A549 (cell line): ENCODE measurements at regions of chr11 and their contacts with region 1.

Region 1: GRCh38 chr11:45233121-45233803 is 52.9 kb downstream of the SYT13 start:
- DNase-seq: peak; percentile 61 to 93
- ATAC-seq: peak; percentile 87 to 96
- H3K4me3 ChIP-seq: no peak overlapping the region
- H3K27ac ChIP-seq: no peak overlapping the region
- H3K4me1 ChIP-seq: no peaks in the 10 kb centered on the region
- CTCF ChIP-seq: peak; percentile 61
- EP300 ChIP-seq: no peak
- POLR2A ChIP-seq: no peak
- RAD21 ChIP-seq: peak; percentile 31 to 41; a peak in 2 of 5 replicates

Region 2: GRCh38 chr11:45209891-45210699 is 23.2 kb before region 1 on chr11:
- CTCF ChIA-PET with region 1: interaction called, 12 read pairs
- POLR2A ChIA-PET with region 1: no interaction called
- DNase-seq: no peak
- ATAC-seq: no peak
- H3K4me3 ChIP-seq: no peak overlapping the region
- H3K27ac ChIP-seq: no peak overlapping the region
- H3K4me1 ChIP-seq: no peaks in the 10 kb centered on the region
- CTCF ChIP-seq: no peak
- EP300 ChIP-seq: no peak
- POLR2A ChIP-seq: no peak
- RAD21 ChIP-seq: no peak

Region 3: DNA sequence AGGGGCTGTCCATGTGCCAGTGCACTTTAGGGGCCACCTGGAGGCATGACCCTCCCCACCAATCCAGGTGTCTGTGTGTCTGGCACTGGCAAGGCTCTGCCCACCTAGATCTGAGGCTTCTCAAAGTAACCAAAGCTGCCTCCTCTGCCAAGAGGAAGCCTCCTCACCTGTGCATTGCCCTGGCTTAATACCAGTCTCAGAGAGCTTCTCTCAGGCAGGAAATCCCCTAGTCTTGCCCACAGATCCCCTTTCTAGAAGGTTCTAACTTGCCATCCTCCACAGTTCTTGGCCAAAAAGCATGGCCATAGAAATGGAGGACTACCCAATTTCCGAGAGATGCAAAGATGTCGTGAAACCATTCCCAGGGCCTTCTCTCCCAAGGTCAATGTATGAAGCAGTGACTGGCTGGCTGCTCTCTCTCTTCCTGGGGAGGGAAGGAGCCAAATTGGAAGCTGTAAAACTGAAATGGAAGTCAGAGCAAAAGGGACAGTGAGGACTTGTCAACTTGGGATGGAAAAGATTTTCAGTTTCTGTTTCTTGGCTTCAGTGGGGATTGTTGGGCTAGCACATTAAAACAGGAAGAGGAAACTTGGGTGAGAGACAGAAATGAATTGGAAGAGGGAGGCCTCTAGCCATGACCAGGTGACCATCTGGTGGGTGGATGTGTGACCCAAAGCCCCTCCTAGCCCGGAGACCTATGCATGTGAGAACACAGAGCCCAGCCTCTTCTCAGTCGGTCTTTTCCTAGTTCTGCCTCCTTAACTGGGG is 18.0 kb before region 1 on chr11:
- CTCF ChIA-PET with region 1: interaction called, 12 read pairs
- POLR2A ChIA-PET with region 1: no interaction called
- DNase-seq: no peak
- ATAC-seq: no peak
- H3K4me3 ChIP-seq: no peak overlapping the region
- H3K27ac ChIP-seq: no peak overlapping the region
- H3K4me1 ChIP-seq: no peaks in the 10 kb centered on the region
- CTCF ChIP-seq: no peak
- EP300 ChIP-seq: no peak
- POLR2A ChIP-seq: no peak
- RAD21 ChIP-seq: no peak

Region 4: GRCh38 chr11:45252134-45252855 is 19.0 kb after region 1 on chr11:
- CTCF ChIA-PET with region 1: interaction called, 69 read pairs
- POLR2A ChIA-PET with region 1: no interaction called
- DNase-seq: peak; percentile 69 to 78
- ATAC-seq: peak; percentile 91 to 99
- H3K4me3 ChIP-seq: no peak overlapping the region
- H3K27ac ChIP-seq: 0 out of 6 replicates have a peak overlapping the region, but pooled peaks of 1 of the 2 experiments have one; percentile 29
- H3K4me1 ChIP-seq: 0 out of 3 replicates have a peak, but pooled peaks cover 6% of the 10 kb centered on the region
- CTCF ChIP-seq: peak; percentile 82
- EP300 ChIP-seq: no peak
- POLR2A ChIP-seq: no peak
- RAD21 ChIP-seq: peak; percentile 90 to 92

Region 5: GRCh38 chr11:45285930-45286632 is 52.8 kb after region 1 on chr11 and contains the start of gene SYT13:
- CTCF ChIA-PET with region 1: interaction called, 12 read pairs
- POLR2A ChIA-PET with region 1: no interaction called
- DNase-seq: peak; percentile 30 to 62
- ATAC-seq: peak; percentile 86 to 91
- H3K4me3 ChIP-seq: peak within 1 kb of the TSS; percentile 65
- H3K27ac ChIP-seq: peak within 1 kb of the TSS; percentile 73 to 87
- H3K4me1 ChIP-seq: peaks cover 12% of the 10 kb centered on the region
- CTCF ChIP-seq: no peak
- EP300 ChIP-seq: no peak
- POLR2A ChIP-seq: peak; percentile 24; the same call in 1 of the 2 replicates
- RAD21 ChIP-seq: no peak
- polyA plus RNA-seq, gene SYT13: 8.1 and 10.7 TPM in 2 replicates

Region 6: DNA sequence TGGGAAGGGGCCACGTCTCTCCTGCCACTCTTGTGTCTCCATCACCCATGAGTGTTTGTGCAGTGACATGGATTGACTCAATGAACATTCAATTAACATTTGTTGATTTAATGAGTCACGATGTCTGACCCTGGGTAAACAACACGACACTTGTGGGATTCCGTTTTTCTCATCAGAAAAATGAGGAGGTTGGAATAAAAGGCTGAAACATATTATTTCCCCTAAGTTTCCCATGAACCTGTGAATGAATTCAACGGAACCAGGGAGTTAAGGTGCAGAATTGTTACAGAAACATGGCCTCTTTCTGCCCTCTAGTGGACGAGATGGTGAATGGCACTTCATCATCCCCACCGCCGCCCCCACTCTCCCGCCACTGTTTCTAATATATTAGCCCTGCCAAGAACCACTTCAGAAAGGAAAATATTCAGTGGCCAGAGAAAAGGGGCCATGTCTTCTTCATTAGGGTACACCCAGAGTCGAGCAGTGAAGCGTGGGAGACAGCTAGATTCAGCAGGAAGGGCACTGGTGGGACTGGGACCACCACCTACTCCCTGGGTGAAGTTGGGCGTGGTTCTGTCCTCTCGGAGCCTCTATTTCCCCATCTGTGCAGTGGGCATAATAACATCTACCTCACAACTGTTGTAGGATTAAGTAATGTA is 99.1 kb after region 1 on chr11:
- CTCF ChIA-PET with region 1: interaction called, 10 read pairs
- POLR2A ChIA-PET with region 1: no interaction called
- DNase-seq: peak; percentile 29 to 64
- ATAC-seq: peak; percentile 69 to 88; a peak in 5 of 6 replicates
- H3K4me3 ChIP-seq: no peak overlapping the region
- H3K27ac ChIP-seq: no peak overlapping the region
- H3K4me1 ChIP-seq: no peaks in the 10 kb centered on the region; the same call in 2 of the 3 replicates
- CTCF ChIP-seq: peak; percentile 87
- EP300 ChIP-seq: no peak
- POLR2A ChIP-seq: no peak
- RAD21 ChIP-seq: peak; percentile 75 to 90